ENCODE measurements at regions of chr5 and their contacts with region 1.

Region 1: DNA sequence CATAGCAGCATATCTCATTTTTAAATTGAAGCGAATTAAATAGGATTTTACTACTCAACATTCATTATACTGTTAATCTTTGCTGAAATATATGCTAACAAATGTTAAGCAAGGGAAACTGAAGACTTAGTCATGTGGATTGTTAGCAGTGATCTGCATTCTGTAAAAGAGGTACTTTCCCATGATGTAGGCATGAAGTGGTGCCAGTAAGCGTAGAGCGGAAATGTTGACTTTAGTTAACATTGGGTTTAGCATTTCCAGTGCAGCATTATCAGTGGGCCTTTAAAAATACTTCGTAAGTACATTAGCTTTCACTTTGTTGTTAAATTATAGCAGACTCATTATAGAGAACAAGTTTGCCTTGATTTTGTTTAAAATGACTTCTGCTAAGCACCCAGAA is 130.3 kb downstream of the CDC42SE2 start:
- DNase-seq: no peak
- H3K4me3 Mint-ChIP-seq: no peak overlapping the region
- H3K27ac Mint-ChIP-seq: peak overlapping the region; percentile 39
- H3K4me1 Mint-ChIP-seq: peaks cover 4% of the 10 kb centered on the region
- H3K27me3 Mint-ChIP-seq: no peaks in the 10 kb centered on the region
- CTCF ChIP-seq: no peak

Region 2: GRCh38 chr5:131382407-131383395 is 11.4 kb before region 1 on chr5:
- CTCF ChIA-PET with region 1: interaction called, 17 read pairs
- POLR2A ChIA-PET with region 1: interaction called, 4 read pairs
- intact Hi-C with region 1: no loop called
- DNase-seq: peak; percentile 81
- H3K4me3 Mint-ChIP-seq: no peak overlapping the region
- H3K27ac Mint-ChIP-seq: no peak overlapping the region
- H3K4me1 Mint-ChIP-seq: peaks cover 29% of the 10 kb centered on the region
- H3K27me3 Mint-ChIP-seq: no peaks in the 10 kb centered on the region
- CTCF ChIP-seq: peak; percentile 50

Region 3: GRCh38 chr5:131986161-131986912 is 592.2 kb after region 1 on chr5:
- CTCF ChIA-PET with region 1: no interaction called
- POLR2A ChIA-PET with region 1: no interaction called
- intact Hi-C with region 1: no loop called
- DNase-seq: no peak
- H3K4me3 Mint-ChIP-seq: no peak overlapping the region
- H3K27ac Mint-ChIP-seq: no peak overlapping the region
- H3K4me1 Mint-ChIP-seq: no peaks in the 10 kb centered on the region
- H3K27me3 Mint-ChIP-seq: peaks cover 3% of the 10 kb centered on the region
- CTCF ChIP-seq: no peak

Measured in MCF 10A (cell line).